Heart right ventricle (tissue), 16 donors: ENCODE measurements at regions of chr9 and their contacts with region 1.

Region 1: GRCh38 chr9:80867731-80868130 is 821.6 kb downstream of the TLE1 start:
- DNase-seq: no peak
- ATAC-seq: no peak
- H3K4me3 ChIP-seq: no peak overlapping the region
- H3K27ac ChIP-seq: no peak overlapping the region
- H3K4me1 ChIP-seq: no peaks in the 10 kb centered on the region
- H3K27me3 ChIP-seq: no peaks in the 10 kb centered on the region
- CTCF ChIP-seq: no peak

Region 2: GRCh38 chr9:80467632-80468031 is 400.1 kb before region 1 on chr9:
- intact Hi-C with region 1: no loop called
- DNase-seq: peak in 1 of 2 donors; percentile 19
- ATAC-seq: peak in 7 of 8 donors; percentile 54 to 90 (median 72)
- H3K4me3 ChIP-seq: no peak overlapping the region
- H3K27ac ChIP-seq: peak overlapping the region in 3 of 10 donors; percentile 24 to 40 (median 33)
- H3K4me1 ChIP-seq: no peaks in the 10 kb centered on the region
- H3K27me3 ChIP-seq: no peaks in the 10 kb centered on the region
- CTCF ChIP-seq: no peak

Region 3: GRCh38 chr9:80976403-80976802 is 108.7 kb after region 1 on chr9:
- intact Hi-C with region 1: loop called in 1 of 10 experiments (anchors 10 kb)
- DNase-seq: no peak
- ATAC-seq: no peak
- H3K4me3 ChIP-seq: no peak overlapping the region
- H3K27ac ChIP-seq: no peak overlapping the region
- H3K4me1 ChIP-seq: no peaks in the 10 kb centered on the region
- H3K27me3 ChIP-seq: no peaks in the 10 kb centered on the region
- CTCF ChIP-seq: no peak